Ascending aorta (tissue), 2 donors: ENCODE measurements at regions of chr11 and their contacts with region 1.

Region 1: GRCh38 chr11:111097191-111097590 is 148.3 kb upstream of the POU2AF2 start:
- DNase-seq: peak in 1 of 2 donors; percentile 67
- H3K4me3 ChIP-seq: peak overlapping the region in 1 of 2 donors; percentile 51
- H3K27ac ChIP-seq: no peak overlapping the region
- H3K4me1 ChIP-seq: no peaks in the 10 kb centered on the region
- H3K27me3 ChIP-seq: no peaks in the 10 kb centered on the region
- CTCF ChIP-seq: no peak

Region 2: DNA sequence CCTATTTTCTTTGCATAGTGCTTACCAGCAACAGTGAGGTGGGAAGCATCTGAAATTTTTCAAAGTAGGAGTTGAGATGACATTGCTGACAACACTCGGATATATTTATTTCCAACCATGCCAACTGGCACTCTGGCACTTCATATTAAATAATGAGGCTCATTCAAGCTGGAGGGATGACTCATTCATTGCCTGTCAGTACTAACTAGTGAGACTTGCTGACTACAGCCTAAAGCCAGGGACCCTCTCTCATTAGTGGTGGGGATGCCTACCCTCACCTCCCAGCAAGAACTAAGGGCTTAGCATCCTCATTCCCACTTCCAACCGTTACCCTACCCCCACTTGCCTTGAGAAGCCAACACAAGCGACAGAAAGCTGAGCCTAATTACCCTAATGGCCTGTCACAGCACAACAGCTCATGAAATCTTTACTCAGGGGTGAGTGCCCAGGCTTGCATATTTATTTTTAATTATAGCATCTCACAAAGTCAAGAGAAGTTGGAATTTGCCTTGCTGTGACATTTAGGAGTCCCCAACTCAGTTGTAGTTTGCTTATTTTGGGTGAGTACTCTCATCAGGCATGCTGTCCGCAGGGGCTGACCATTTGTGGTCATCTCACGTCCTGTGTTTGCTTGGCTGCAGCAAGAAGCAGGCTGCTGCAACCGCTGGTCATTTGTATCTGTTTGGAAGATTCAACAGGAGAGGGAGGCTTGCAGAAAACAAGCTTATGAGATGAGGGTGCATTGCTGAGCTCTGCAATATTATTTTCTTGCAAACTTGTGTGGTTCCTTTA is 33.3 kb before region 1 on chr11:
- intact Hi-C with region 1: no loop called
- DNase-seq: no peak
- H3K4me3 ChIP-seq: no peak overlapping the region
- H3K27ac ChIP-seq: no peak overlapping the region
- H3K4me1 ChIP-seq: no peaks in the 10 kb centered on the region
- H3K27me3 ChIP-seq: no peaks in the 10 kb centered on the region
- CTCF ChIP-seq: no peak

Region 3: GRCh38 chr11:111707039-111707690 is 610.0 kb after region 1 on chr11:
- intact Hi-C with region 1: loop called (anchors 10 kb)
- DNase-seq: no peak
- H3K4me3 ChIP-seq: no peak overlapping the region
- H3K27ac ChIP-seq: peak overlapping the region in 1 of 2 donors; percentile 18
- H3K4me1 ChIP-seq: no peaks in the 10 kb centered on the region
- H3K27me3 ChIP-seq: no peaks in the 10 kb centered on the region
- CTCF ChIP-seq: no peak